Transverse colon (tissue), 4 donors: ENCODE measurements at regions of chr5 and their contacts with region 1.

Region 1: GRCh38 chr5:147822686-147823491 is 8.6 kb downstream of the SPINK1 start:
- DNase-seq: peak; percentile 35
- H3K4me3 ChIP-seq: no peak overlapping the region
- H3K27ac ChIP-seq: no peak overlapping the region
- H3K4me1 ChIP-seq: peaks cover 0 to 8% (median 1%) of the 10 kb centered on the region in 4 donors
- H3K27me3 ChIP-seq: no peaks in the 10 kb centered on the region
- CTCF ChIP-seq: peak; percentile 82 to 93 (median 88)
- EP300 ChIP-seq: no peak
- POLR2A ChIP-seq: no peak

Region 2: DNA sequence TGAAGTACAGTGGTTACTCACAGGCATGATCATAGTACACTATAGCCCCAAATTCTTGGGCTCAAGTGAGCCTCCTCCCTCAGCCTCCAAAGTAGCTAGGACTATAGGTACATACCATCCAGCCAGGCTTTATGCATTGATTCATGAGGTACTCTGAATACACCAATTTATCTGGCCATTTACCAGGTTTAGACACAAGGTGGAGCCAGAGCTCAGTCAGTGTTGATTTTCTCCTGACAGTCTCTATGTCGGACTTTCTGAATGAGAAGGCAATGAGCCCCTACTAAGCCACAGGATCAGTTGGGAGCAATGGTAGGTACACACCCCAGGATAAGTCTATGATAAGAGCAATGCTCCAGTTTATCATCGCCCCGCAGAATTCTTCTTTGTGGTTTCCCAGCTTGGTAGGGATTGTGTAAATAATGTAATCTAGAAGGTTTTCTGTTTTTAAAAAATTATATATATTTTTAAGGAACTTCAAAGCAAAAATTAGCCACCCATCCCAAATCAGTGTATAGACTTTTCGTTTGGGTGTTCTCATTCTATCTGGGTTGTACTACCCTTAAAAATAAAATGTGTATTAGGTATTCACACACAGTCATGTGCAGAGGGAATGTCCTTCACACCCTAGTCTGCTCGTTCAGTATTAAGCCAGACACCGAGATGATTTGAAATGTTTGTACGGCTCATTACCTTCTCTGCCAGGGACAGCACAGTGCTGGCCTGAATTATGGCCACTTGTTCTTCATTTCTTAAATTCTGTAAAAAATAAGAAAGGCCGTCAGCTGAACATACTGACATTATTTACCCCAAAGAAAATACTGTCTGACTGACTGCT is 194.6 kb before region 1 on chr5:
- in situ Hi-C with region 1: loop called (anchors 5 to 10 kb)
- intact Hi-C with region 1: loop called (anchors 2 kb)
- DNase-seq: peak; percentile 61
- H3K4me3 ChIP-seq: no peak overlapping the region
- H3K27ac ChIP-seq: no peak overlapping the region
- H3K4me1 ChIP-seq: no peaks in the 10 kb centered on the region
- H3K27me3 ChIP-seq: no peaks in the 10 kb centered on the region
- CTCF ChIP-seq: peak; percentile 65 to 79 (median 68)
- EP300 ChIP-seq: no peak
- POLR2A ChIP-seq: no peak